Heart left ventricle (tissue), 16 donors: ENCODE measurements at regions of chr17 and their contacts with region 1.

Region 1: DNA sequence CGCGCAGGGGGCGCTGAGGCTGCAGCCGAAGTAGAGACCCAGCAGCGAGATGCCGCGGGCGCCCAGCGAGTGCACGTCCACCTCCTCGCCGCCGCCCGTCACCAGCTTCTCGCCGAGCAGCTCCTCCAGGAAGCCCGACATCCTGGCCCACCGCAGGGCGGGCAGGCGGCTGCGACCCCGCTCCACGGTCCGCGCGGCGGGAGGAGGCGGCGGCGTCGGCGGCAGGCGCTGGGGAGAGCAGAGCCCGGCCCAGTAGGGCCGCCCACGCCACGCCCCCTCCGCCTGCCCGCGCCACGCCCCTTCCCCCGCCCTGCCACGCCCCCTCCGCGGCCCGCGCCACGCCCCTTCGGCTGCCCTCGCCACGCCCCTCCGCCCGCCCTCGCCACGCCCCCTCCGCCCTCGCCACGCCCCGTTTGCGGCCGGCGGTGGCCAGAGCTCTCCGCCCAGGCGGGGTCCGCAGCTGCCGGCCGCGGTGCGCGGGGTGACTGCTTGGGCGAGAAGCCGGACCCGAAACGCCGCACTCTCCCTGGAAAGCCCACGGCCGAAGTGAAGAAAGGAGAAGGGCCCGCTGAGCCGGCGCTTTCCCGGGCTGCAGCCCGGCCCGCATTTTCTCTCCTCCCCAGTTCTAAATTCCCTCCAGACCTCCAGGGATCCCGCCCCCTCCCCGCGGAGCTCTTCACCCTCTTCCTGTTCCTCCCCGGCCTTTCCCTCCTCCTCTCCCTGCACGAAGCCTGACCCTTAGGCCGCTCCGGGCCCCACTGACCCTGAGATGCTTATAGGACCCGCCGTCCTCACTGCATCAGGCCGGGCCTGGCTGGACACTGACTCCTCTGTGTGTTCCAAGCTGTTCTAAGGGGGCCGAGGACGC is at the start of gene NXN:
- DNase-seq: peak; percentile 87 to 96 (median 90)
- ATAC-seq: peak; percentile 78 to 98 (median 93)
- H3K4me3 ChIP-seq: peak within 1 kb of the TSS; percentile 70 to 91 (median 77)
- H3K27ac ChIP-seq: peak within 1 kb of the TSS; percentile 57 to 95 (median 82)
- H3K4me1 ChIP-seq: peaks cover 0 to 49% (median 25%) of the 10 kb centered on the region in 12 donors
- H3K27me3 ChIP-seq: peaks cover 0 to 21% (median 0%) of the 10 kb centered on the region in 9 donors
- CTCF ChIP-seq: peak in 6 of 12 donors; percentile 19 to 56 (median 40)
- POLR2A ChIP-seq: peak in 1 of 2 donors; percentile 56
- total RNA-seq, gene NXN: 8.9 to 20.3 (median 15.8) TPM

Region 2: GRCh38 chr17:409848-410545 is 569.8 kb before region 1 on chr17:
- intact Hi-C with region 1: loop called in 2 of 10 experiments (anchors 5 kb)
- DNase-seq: peak; percentile 99 to 100 (median 100)
- ATAC-seq: peak; percentile 92 to 97 (median 92)
- H3K4me3 ChIP-seq: peak overlapping the region; percentile 65 to 100 (median 82)
- H3K27ac ChIP-seq: peak overlapping the region; percentile 19 to 92 (median 76)
- H3K4me1 ChIP-seq: peaks cover 0 to 34% (median 15%) of the 10 kb centered on the region in 12 donors
- H3K27me3 ChIP-seq: no peaks in the 10 kb centered on the region
- CTCF ChIP-seq: no peak
- POLR2A ChIP-seq: peak in 1 of 2 donors; percentile 52

Region 3: GRCh38 chr17:781805-782731 is 197.7 kb before region 1 on chr17 and contains the starts of genes GLOD4 and MRM3:
- intact Hi-C with region 1: loop called in 1 of 10 experiments (anchors 5 kb)
- DNase-seq: peak; percentile 92 to 96 (median 93)
- ATAC-seq: peak; percentile 98 to 99 (median 98)
- H3K4me3 ChIP-seq: peak within 1 kb of the TSS; percentile 71 to 99 (median 86)
- H3K27ac ChIP-seq: peak within 1 kb of the TSS; percentile 5 to 87 (median 82)
- H3K4me1 ChIP-seq: peaks cover 3 to 30% (median 22%) of the 10 kb centered on the region in 12 donors
- H3K27me3 ChIP-seq: no peaks in the 10 kb centered on the region
- CTCF ChIP-seq: peak in 4 of 12 donors; percentile 14 to 27 (median 23)
- POLR2A ChIP-seq: peak in 1 of 2 donors; percentile 70
- total RNA-seq, gene GLOD4: 21.7 to 39.7 (median 26.8) TPM
- total RNA-seq, gene MRM3: 14.8 to 35.4 (median 18.3) TPM

Region 4: GRCh38 chr17:850851-851763 is 128.7 kb before region 1 on chr17:
- intact Hi-C with region 1: loop called in 2 of 10 experiments (anchors 1 to 10 kb)
- DNase-seq: peak in 4 of 5 donors; percentile 33 to 53 (median 40)
- ATAC-seq: peak in 3 of 4 donors; percentile 43 to 64 (median 46)
- H3K4me3 ChIP-seq: peak overlapping the region in 8 of 12 donors; percentile 16 to 37 (median 22)
- H3K27ac ChIP-seq: peak overlapping the region; percentile 29 to 86 (median 56)
- H3K4me1 ChIP-seq: peaks cover 0 to 54% (median 24%) of the 10 kb centered on the region in 12 donors
- H3K27me3 ChIP-seq: no peaks in the 10 kb centered on the region
- CTCF ChIP-seq: no peak
- POLR2A ChIP-seq: no peak

Region 5: DNA sequence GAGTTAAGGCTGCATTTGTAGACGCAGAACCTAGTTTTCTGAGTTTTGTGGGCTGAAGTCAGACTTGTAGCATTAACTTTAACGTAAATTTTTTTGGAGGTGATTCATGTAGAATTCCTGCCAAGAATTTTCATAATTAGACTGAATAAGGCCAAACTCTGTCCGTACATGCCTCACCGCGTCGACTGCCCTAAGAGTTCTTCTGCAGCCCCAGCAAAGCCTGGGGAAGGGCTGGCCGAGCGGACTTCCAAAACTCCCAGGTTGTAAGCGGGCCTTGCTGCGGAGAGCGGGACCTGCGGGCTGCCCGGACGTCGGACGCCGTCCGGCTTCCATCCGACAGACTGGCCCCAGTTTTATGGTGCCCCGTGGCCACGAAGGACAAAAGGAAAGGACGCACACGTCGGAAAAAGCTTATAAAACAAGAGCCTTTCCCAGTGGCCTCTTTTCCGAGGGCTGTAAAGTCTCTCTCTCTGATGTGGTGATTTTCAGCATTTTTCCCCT is 75.7 kb before region 1 on chr17:
- intact Hi-C with region 1: loop called in 1 of 10 experiments (anchors 5 kb)
- DNase-seq: no peak
- ATAC-seq: no peak
- H3K4me3 ChIP-seq: no peak overlapping the region
- H3K27ac ChIP-seq: peak overlapping the region in 1 of 12 donors; percentile 87
- H3K4me1 ChIP-seq: peaks cover 0 to 28% (median 21%) of the 10 kb centered on the region in 12 donors
- H3K27me3 ChIP-seq: no peaks in the 10 kb centered on the region
- CTCF ChIP-seq: no peak
- POLR2A ChIP-seq: no peak

Region 6: DNA sequence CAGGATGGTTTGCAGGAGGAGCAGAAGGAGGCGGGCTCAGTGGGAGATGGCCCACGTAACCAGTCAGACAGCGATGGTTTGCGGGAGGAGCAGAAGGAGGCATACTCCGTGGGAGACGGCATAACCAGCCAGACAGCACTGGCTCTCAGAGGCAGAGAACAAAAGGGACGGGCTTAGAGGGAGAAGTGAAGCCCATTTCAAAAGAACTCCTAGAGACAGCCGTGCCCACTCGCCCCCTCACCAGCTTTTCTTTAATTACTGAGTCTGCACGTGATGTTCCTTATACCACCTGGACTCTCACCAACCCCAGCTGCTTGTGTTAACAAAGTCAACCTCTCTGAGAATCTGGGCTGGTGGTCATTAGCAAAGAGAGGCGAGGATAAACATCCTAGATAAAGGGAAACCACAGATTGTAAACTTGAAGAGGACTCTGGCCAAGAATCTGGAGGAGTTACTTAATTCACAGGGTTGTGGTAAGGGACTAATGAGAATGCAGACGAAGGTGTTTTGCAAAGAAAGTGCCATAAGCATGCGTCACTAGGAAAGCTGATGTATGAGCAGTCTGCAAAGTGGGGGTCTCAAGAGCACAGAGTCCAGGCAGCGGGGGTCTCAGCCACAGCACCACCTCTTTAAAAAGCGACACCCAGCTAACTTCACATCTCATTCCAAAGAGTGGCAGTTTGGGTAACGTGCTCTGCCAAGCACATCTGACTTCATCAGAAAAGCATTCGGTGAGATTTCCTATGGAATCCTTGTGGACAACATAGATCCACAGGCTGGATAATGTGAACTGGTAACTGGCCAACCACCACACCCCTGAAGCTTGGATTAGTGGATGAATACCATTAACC is 51.9 kb before region 1 on chr17:
- intact Hi-C with region 1: loop called in 2 of 10 experiments (anchors 10 kb)
- DNase-seq: no peak
- ATAC-seq: peak in 2 of 4 donors; percentile 13 to 46
- H3K4me3 ChIP-seq: no peak overlapping the region
- H3K27ac ChIP-seq: peak overlapping the region in 1 of 12 donors; percentile 65
- H3K4me1 ChIP-seq: peaks cover 0 to 19% (median under 1%) of the 10 kb centered on the region in 12 donors
- H3K27me3 ChIP-seq: no peaks in the 10 kb centered on the region
- CTCF ChIP-seq: no peak
- POLR2A ChIP-seq: no peak

Region 7: GRCh38 chr17:1031711-1032110 is 51.9 kb after region 1 on chr17:
- intact Hi-C with region 1: no loop called
- DNase-seq: peak; percentile 83 to 85 (median 83)
- ATAC-seq: peak; percentile 37 to 71 (median 56)
- H3K4me3 ChIP-seq: peak overlapping the region; percentile 14 to 69 (median 56)
- H3K27ac ChIP-seq: peak overlapping the region in 10 of 12 donors; percentile 62 to 88 (median 76)
- H3K4me1 ChIP-seq: peaks cover 6 to 78% (median 46%) of the 10 kb centered on the region in 12 donors
- H3K27me3 ChIP-seq: no peaks in the 10 kb centered on the region
- CTCF ChIP-seq: no peak
- POLR2A ChIP-seq: no peak